Motor neuron (in vitro differentiated cells): ENCODE measurements at regions of chr14 and their contacts with region 1.

Region 1: DNA sequence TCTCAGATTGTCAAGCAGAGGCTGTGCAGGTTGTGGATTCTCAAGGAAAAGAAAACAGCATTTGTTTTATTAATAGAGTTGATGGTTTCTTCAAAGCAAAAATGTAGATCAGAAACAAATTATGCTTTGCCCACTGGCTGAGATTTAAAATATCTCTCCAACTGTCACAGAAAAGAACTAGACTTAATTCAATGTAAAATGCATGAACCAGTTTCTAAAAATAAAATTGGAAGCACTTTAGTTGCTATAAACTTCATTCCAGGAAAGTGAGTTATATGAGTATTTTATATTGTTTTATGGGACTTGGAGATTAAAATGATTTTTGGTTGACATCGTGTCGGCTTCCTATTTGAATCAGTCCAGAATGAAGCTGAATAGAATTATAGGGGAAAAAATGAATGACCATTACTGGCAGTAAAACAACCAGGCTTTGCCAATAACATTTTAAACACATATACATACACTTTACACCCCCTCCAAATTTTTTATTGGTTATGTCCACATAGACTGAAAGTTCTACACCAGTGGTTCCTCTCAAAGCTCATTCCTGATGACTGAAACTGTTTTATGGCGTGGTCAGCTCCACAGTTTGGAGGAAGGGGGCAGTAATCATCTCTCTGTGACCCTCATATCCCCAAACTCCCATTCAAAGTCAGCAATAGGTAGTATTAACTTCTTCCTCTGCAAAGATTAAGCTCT is 55.5 kb upstream of the DAAM1 start:
- ATAC-seq: peak in 1 of 8 experiments; percentile 50
- H3K4me3 ChIP-seq: no peak overlapping the region
- H3K27ac ChIP-seq: no peak overlapping the region
- H3K4me1 ChIP-seq: peaks cover 5 to 8% of the 10 kb centered on the region in 2 donors

Region 2: DNA sequence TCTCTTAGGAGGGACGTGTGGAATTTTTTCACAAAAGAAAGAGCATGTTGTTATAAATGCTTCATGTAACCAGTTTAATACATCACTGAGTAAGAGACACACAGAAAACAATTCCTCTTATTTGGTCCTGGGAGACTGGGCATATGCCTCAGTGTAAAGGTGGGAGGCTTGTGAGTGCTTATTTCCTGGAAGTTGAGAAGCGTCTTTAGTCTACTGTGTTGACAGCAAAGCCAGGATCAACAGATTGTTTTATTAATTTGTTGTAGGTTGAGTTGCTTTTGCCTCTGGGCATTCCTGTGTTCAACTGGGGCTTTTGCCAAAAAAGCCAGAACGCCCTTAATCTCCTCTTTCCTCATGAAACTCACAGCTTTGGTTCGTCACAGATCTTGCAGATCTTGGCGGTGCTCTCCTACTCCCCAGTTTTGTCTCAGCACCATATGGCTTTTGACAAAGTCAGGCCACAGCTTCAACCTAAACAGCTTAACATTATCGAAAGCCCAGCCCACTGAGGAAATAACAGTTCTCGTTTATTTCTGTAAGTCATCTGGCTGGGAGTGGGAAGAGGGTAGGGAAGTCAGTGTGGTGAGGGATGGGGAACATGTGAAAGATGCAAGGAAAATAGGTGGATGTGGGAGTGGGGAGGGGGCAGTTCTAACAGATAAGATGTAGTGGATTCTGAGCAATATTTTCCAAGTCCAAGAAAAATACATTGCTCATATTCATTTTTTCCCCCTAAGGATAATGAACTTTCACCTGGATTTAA is 268.0 kb before region 1 on chr14:
- in situ Hi-C with region 1: no loop called
- ATAC-seq: peak in 3 of 8 experiments; percentile 74 to 81 (median 75)
- H3K4me3 ChIP-seq: no peak overlapping the region
- H3K27ac ChIP-seq: no peak overlapping the region
- H3K4me1 ChIP-seq: peaks cover 0 to 9% of the 10 kb centered on the region in 2 donors

Region 3: GRCh38 chr14:59438195-59438647 is 305.3 kb after region 1 on chr14:
- in situ Hi-C with region 1: loop called in 8 of 9 experiments (anchors 5 to 25 kb)
- ATAC-seq: peak in 1 of 8 experiments; percentile 64
- H3K4me3 ChIP-seq: no peak overlapping the region
- H3K27ac ChIP-seq: no peak overlapping the region
- H3K4me1 ChIP-seq: no peaks in the 10 kb centered on the region

Region 4: GRCh38 chr14:59543873-59544272 is 410.9 kb after region 1 on chr14:
- in situ Hi-C with region 1: no loop called
- ATAC-seq: no peak
- H3K4me3 ChIP-seq: no peak overlapping the region
- H3K27ac ChIP-seq: no peak overlapping the region
- H3K4me1 ChIP-seq: no peaks in the 10 kb centered on the region